ENCODE measurements at regions of chr13 and their contacts with region 1.

Region 1: DNA sequence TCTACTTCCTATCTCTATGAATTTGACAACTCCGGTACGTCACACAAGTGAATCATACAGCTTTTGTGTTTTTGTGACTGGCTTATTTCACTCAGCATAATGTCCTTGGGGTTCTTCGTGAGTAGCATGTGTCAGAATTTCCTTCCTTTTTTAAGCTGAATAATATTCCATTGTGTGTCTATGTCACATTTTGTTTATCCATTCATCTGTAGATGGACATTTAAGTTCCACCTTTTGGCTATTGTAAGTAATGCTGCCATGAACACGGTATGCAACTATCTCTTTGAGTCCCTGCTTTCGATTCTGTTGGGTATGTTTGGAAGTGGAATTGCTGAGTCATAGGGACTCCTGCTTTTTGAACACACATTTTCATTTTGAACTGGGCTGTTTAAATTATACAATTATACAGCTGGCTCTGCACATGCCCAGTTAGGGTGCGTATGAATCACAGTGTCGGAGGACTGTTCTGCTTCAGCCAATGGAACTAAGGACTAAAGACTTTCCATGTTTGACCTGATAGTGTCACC is 43.0 kb upstream of the C13orf42 start:
- DNase-seq: peak; percentile 73
- H3K4me3 ChIP-seq: peak overlapping the region; percentile 45
- H3K27ac ChIP-seq: no peak overlapping the region
- H3K4me1 ChIP-seq: peaks cover 4% of the 10 kb centered on the region; the same call in 1 of the 2 replicates
- H3K27me3 ChIP-seq: peaks cover 25% of the 10 kb centered on the region

Region 2: DNA sequence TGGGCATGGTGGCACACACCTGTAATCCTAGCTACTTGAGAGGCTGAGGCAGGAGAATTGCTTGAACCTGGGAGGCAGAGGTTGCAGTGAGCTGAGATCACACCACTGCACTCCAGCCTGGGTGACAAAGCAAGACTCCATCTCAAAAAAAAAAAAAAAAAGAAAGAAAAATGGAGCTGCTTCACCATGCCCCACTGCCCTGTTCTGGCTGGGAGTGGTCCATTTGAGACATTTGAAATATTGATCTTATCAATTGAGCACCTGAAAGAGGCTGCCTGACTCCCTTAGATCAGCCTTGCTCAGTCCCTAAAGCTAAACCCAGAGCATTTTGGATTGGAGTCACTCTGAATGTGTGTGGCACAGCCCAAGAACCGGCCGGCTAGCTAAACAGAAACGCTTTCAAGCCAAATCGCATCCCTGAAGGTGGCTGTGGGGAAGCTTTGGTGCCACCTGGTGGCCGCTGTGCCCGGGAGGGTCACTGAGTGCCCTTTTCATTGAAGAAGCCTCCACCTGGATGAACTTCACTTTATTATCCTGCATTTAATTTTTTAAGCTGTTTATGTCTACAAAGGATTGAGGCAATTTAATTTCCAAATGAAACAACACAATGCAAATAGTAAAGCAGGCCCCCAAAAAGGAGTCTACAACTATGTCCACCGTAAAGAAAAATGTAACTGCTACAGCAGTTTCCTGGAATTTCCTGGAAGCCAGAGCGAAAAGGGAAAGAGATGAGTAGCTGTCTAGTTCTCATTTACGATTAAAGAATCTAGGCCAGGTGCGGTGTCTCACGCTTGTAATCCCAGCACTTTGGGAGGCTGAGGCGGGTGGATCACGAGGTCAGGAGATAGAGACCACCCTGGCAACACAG is 132.3 kb after region 1 on chr13:
- in situ Hi-C with region 1: loop called (anchors 10 kb)
- DNase-seq: peak; percentile 81
- H3K4me3 ChIP-seq: no peak overlapping the region
- H3K27ac ChIP-seq: no peak overlapping the region
- H3K4me1 ChIP-seq: no peaks in the 10 kb centered on the region
- H3K27me3 ChIP-seq: peaks cover 13% of the 10 kb centered on the region

Measured in GM23248 (cell line).